Activated CD4-positive, alpha-beta memory T cell treated with anti-CD3 and anti-CD28 coated beads for 36 hours (primary cell): ENCODE measurements at regions of chr10 and their contacts with region 1.

Region 1: DNA sequence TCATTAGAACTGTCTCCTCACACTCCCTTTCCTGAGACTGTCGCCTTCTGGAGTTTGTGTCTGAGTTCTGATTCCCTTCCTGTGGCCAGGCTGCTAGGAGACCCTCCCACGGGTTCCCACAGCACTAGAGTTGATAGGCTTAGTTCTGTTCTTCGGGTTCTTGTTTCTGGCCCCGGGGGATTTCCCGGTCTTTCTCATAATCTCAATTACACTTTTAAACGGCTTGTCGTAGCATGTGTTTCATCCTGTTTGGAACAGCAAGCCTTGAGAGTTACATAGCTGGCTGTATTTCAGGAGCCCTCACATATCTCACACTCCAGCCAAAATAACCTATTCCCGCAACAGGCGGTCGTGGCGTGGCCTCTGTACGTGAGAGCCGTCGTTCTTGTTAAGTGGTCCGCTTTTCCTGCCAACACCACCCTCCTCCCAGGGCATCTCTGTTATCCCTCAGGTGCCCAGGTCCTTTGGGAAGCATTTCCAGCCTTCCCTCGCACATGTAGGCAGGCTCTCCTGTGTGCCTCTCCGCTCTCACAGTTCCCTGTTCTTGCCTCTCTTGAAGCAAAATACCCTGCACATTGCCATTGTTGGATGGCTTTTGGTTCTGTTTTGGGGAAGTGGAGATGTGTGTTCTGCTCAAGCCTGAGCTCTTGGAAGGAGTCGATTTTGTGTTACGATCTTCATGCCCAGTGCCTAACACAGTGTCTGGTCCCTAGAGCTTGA is 46.0 kb downstream of the CDC123 start:
- DNase-seq: peak; percentile 88
- H3K4me3 Mint-ChIP-seq: peak overlapping the region; percentile 44
- H3K27ac Mint-ChIP-seq: peak overlapping the region; percentile 82
- H3K4me1 Mint-ChIP-seq: peaks cover 37% of the 10 kb centered on the region
- H3K27me3 Mint-ChIP-seq: no peaks in the 10 kb centered on the region

Region 2: DNA sequence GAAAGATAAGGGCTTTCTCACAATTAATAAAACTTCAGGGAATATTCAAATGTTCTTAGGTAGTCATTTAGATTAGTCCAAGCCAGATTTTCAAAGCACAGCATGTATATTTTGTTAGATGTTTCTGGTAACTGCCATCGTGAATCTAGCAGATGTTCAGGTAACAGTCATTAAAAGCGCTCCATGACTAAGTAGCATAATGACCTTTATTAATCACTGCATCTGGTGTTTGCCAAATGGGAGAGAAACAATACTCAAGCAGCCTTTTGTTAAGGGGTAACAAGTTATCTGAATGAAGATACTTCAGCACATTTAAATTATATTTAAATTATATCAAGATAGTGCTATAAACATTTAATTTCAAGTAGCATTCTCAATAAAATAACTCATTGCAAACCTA is 678.0 kb before region 1 on chr10:
- CTCF ChIA-PET with region 1: no interaction called
- POLR2A ChIA-PET with region 1: no interaction called
- intact Hi-C with region 1: no loop called
- DNase-seq: no peak
- H3K4me3 Mint-ChIP-seq: no peak overlapping the region
- H3K27ac Mint-ChIP-seq: no peak overlapping the region
- H3K4me1 Mint-ChIP-seq: no peaks in the 10 kb centered on the region
- H3K27me3 Mint-ChIP-seq: no peaks in the 10 kb centered on the region

Region 3: DNA sequence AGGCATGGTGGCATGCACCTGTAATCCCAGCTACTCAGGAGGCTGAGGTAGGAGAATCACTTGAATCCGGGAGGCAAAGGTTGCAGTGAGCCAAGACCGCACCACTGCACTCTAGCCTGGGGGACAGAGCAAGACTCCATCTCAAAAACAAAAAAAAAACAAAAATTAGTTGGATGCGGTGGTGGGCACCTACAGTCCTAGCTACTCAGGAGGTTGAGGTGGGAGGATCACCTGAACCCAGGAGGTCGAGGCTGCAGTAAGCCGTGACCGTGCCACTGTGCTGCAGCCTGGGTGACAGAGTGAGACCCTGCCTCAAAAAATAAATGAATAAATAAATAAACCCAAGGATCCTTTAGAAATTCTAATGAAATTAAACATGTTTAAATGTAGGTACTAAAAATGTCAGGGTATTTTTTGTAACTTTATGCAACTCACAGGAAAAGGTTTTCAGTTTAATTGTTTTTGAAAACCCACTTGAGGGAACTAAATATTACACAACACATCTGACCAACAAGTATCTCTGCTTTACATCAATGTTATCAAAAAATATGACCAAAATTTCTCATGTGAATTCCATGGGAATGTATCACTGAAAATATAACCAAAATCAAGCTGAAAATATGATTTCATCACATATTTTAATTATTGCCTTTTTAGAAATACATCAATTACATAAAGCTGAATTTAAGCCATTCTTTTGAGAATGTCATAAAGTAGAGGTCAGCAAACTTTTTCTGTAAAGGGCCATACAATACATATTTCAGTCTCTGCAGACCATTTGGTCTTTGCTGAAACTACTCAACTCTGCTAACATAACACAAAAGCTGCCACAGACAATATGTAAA is 223.3 kb before region 1 on chr10:
- CTCF ChIA-PET with region 1: no interaction called
- POLR2A ChIA-PET with region 1: no interaction called
- intact Hi-C with region 1: no loop called
- DNase-seq: no peak
- H3K4me3 Mint-ChIP-seq: no peak overlapping the region
- H3K27ac Mint-ChIP-seq: no peak overlapping the region
- H3K4me1 Mint-ChIP-seq: peaks cover 14% of the 10 kb centered on the region
- H3K27me3 Mint-ChIP-seq: no peaks in the 10 kb centered on the region

Region 4: GRCh38 chr10:12264204-12264940 is 22.4 kb after region 1 on chr10:
- CTCF ChIA-PET with region 1: interaction called, 11 read pairs
- POLR2A ChIA-PET with region 1: interaction called, 4 read pairs
- intact Hi-C with region 1: no loop called
- DNase-seq: peak; percentile 87
- H3K4me3 Mint-ChIP-seq: peak overlapping the region; percentile 47
- H3K27ac Mint-ChIP-seq: peak overlapping the region; percentile 82
- H3K4me1 Mint-ChIP-seq: peaks cover 19% of the 10 kb centered on the region
- H3K27me3 Mint-ChIP-seq: no peaks in the 10 kb centered on the region